Thyroid gland (tissue), 4 donors: ENCODE measurements at regions of chr1 and their contacts with region 1.

Region 1: GRCh38 chr1:40691538-40692428 is at the start of gene NFYC:
- DNase-seq: peak; percentile 97 to 98
- H3K4me3 ChIP-seq: peak within 1 kb of the TSS; percentile 80 to 98 (median 90)
- H3K27ac ChIP-seq: peak within 1 kb of the TSS; percentile 99 to 100 (median 99)
- H3K4me1 ChIP-seq: peaks cover 19 to 20% of the 10 kb centered on the region in 2 donors
- H3K27me3 ChIP-seq: no peaks in the 10 kb centered on the region
- CTCF ChIP-seq: peak in 1 of 6 experiments; percentile 12
- POLR2A ChIP-seq: peak; percentile 93 to 95
- total RNA-seq, gene NFYC: 70.5 to 175 (median 96.7) TPM

Region 2: DNA sequence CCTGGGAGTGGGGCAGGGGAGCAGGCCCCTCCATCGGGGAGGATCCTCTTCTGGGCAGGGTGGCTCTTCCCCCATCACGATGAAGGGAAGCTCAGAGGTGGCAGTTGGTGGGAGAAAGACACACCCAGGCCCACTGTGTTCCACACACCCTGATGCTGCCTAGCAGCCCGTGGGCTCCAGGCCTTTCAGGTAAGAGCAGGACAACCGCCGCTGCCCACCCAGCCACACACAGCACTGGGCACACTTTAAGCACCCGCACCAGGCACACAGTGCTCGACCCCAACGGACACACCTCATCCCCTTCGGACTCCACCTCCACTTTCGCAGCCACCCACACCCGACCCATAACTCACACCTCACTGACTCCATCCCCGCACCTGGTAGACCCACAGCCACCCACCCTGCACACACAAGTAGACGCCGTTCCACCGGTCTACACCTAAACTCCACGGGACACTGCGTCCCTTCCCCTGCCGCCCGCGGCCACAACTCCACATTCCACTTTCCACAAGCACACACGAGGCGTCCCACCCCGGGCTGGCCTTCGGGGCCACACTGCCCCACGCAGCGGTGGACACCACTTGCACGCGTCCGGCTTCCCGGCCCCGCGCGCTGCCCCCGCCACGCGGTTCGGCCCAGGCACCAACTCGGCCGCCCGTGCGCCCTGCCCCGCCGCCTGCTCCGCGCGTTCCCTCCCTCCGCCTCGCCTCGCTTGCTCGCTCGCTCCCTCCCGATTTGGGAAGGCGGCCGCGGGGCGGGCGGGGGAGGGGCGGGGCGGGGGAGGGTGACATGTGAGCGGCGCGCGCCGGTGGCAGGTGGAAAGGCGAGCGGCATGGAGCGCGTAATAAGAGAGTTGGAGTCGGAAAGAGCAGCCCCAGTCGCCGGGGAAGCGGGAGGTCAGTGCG is 91.5 kb after region 1 on chr1 and contains the start of gene KCNQ4:
- intact Hi-C with region 1: loop called (anchors 10 kb)
- DNase-seq: peak; percentile 70 to 76
- H3K4me3 ChIP-seq: peak within 1 kb of the TSS in 1 of 3 donors; percentile 42
- H3K27ac ChIP-seq: no peak within 1 kb of the TSS
- H3K4me1 ChIP-seq: peaks cover 13 to 14% of the 10 kb centered on the region in 2 donors
- H3K27me3 ChIP-seq: no peaks in the 10 kb centered on the region
- CTCF ChIP-seq: no peak
- POLR2A ChIP-seq: no peak
- total RNA-seq, gene KCNQ4: 0.11 to 1.1 (median 0.40) TPM